Activated CD4-positive, alpha-beta T cell treated with anti-CD3 and anti-CD28 coated beads, Interleukin-2, amount 10 ng/mL, durations not matched to agents 24 days and 14 days (primary cell): ENCODE measurements at regions of chr15 and their contacts with region 1.

Region 1: DNA sequence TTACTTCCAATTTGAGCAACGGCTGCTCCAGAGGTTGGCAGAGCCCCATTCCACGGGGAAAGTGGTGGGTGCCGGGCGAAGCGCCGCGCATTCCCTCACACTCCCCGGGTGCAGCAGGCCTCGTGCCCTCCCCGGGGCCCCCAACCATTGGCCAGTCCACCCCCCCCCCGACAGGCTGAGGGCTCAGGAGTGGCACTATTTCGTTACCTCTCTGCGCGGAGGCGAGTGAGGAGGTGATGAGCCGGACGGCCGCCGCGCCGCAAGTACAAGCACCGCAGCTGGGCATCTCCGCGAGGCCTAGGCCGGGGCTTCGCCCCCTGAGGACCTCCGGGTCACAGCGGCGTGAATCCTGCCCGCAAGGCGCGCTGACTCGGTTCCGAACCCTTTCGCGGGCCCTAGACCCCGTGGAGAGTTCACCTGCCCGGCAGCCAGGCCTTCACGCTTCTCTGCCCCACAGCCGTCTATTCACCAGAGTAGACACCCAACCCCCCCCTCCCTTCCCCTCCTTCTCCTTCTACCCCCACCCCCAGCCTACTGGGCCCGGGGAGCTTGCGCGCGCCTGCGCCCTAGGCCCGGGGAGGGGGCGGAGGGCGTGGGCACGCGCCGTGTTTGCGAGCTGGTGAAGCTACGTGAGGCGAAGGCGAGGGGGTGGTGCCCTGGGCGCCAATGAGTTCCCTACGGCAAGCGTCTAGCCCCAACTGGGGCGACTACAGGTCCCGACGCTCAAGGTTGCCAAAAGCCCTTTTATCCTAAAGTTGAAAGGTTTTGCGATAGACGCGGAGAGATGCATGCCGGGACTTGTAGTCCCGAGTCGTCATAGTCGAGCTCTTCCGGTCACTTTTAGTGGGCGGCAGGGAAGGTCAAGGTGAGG is at the start of gene CLPX:
- DNase-seq: peak; percentile 97
- H3K4me3 Mint-ChIP-seq: peak within 1 kb of the TSS; percentile 94
- H3K27ac Mint-ChIP-seq: peak within 1 kb of the TSS; percentile 91
- H3K4me1 Mint-ChIP-seq: peaks cover 22% of the 10 kb centered on the region
- H3K27me3 Mint-ChIP-seq: peaks cover 1% of the 10 kb centered on the region
- total RNA-seq, gene CLPX: 62.8 and 63.5 TPM in 2 replicates

Region 2: DNA sequence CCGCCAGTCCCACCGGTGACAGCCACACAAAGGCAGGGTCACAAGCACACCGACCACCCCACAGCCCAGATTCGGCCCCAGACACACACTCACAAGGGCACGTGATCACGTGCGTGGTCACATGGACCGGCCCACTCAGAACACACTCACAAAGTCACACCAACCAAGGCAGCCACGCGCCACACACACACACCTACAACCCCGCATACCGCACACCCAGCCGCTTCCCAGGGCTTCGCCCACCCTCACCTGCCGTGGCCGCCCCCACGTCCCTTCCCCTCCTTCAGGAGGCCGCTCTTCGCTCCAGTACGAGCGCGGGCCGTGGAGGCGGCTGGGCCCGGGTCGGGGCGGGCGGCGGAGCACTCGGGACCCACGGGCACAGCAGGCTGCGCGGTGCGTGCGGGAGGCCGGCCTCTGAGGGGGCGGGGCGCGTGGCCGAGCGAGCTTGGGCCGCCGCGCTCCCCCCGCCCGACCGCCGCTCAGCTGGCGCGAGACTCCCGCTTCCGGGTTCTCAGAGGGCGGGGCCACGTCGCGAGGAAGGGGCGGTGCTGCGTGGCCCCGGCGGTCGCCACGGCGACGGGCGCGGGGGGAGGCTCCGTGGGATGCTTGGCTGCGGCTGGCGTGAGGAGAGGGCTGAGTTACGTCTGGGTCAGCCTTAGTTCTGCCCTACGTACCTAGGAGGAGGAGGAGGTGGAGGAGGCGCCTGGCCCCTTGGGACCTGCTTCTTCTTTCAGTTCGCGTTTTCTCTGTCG is 195.5 kb before region 1 on chr15 and contains the start of gene SPG21:
- intact Hi-C with region 1: loop called (anchors 1 kb)
- DNase-seq: peak; percentile 98
- H3K4me3 Mint-ChIP-seq: peak within 1 kb of the TSS; percentile 94
- H3K27ac Mint-ChIP-seq: peak within 1 kb of the TSS; percentile 89
- H3K4me1 Mint-ChIP-seq: peaks cover 42% of the 10 kb centered on the region
- H3K27me3 Mint-ChIP-seq: no peaks in the 10 kb centered on the region
- total RNA-seq, gene SPG21: 70.4 and 76.2 TPM in 2 replicates

Region 3: DNA sequence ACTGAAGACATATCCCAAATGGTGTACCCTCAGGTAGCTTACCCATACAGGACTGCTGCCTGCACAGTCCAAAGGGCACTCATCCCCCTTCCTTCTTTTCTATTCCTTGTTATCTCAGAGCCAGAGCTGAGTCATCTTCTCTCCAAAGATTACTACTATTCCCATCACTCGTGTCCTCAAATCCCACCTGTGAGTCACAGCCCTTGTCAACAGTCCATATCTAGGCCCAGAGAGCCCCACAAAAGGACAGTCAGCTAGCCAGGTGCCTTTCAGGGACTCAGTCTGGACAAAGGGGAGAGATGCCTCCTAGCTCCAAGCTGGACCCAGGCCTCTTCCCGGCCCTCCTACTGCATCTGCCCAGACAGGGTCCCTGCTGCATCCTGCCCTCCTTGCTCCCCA is 90.6 kb after region 1 on chr15:
- intact Hi-C with region 1: loop called (anchors 1 kb)
- DNase-seq: no peak
- H3K4me3 Mint-ChIP-seq: no peak overlapping the region
- H3K27ac Mint-ChIP-seq: no peak overlapping the region
- H3K4me1 Mint-ChIP-seq: peaks cover 18% of the 10 kb centered on the region
- H3K27me3 Mint-ChIP-seq: no peaks in the 10 kb centered on the region

Region 4: GRCh38 chr15:65400760-65401610 is 215.9 kb after region 1 on chr15:
- intact Hi-C with region 1: no loop called
- DNase-seq: peak; percentile 83
- H3K4me3 Mint-ChIP-seq: no peak overlapping the region
- H3K27ac Mint-ChIP-seq: no peak overlapping the region
- H3K4me1 Mint-ChIP-seq: peaks cover 8% of the 10 kb centered on the region
- H3K27me3 Mint-ChIP-seq: peaks cover 56% of the 10 kb centered on the region